Tibial artery (tissue), 4 donors: ENCODE measurements at regions of chr19 and their contacts with region 1.

Region 1: DNA sequence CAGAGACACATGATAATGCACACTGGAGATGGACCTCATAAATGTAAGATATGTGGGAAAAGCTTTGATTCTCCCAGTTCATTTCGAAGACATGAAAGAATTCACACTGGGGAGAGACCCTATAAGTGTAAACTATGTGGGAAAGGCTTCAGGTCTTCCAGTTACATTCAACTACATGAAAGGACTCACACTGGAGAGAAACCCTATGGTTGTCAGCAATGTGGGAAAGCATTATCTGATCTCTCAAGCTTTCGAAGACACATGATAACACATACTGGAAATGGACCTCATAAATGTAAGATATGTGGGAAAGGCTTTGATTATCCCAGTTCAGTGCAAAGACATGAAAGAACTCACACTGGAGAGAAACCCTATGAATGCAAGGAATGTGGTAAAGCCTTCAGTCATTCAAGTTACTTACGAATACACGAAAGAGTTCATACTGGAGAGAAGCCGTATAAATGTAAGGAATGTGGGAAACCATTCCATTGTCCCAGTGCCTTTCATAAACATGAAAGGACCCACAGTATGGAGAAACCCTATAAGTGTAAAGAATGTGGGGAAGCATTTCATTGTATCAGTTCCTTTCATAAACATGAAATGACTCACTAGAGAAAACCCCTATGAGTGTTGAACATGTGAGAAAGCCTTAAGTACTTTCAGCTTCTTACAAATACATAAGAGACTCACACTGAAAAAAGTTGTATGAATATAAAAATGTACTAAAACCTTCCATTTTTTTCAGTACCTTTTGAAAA is 14.7 kb downstream of the ZNF441 start:
- DNase-seq: no peak
- H3K4me3 ChIP-seq: no peak overlapping the region
- H3K27ac ChIP-seq: no peak overlapping the region
- H3K4me1 ChIP-seq: no peaks in the 10 kb centered on the region
- H3K27me3 ChIP-seq: no peaks in the 10 kb centered on the region
- CTCF ChIP-seq: no peak

Region 2: GRCh38 chr19:11481777-11482383 is 299.6 kb before region 1 on chr19:
- intact Hi-C with region 1: no loop called
- DNase-seq: peak; percentile 69 to 83
- H3K4me3 ChIP-seq: peak overlapping the region; percentile 16 to 44
- H3K27ac ChIP-seq: peak overlapping the region in 1 of 2 donors; percentile 10
- H3K4me1 ChIP-seq: peaks cover 8 to 37% (median 36%) of the 10 kb centered on the region in 4 donors
- H3K27me3 ChIP-seq: peaks cover 22 to 77% of the 10 kb centered on the region in 2 donors
- CTCF ChIP-seq: no peak

Region 3: DNA sequence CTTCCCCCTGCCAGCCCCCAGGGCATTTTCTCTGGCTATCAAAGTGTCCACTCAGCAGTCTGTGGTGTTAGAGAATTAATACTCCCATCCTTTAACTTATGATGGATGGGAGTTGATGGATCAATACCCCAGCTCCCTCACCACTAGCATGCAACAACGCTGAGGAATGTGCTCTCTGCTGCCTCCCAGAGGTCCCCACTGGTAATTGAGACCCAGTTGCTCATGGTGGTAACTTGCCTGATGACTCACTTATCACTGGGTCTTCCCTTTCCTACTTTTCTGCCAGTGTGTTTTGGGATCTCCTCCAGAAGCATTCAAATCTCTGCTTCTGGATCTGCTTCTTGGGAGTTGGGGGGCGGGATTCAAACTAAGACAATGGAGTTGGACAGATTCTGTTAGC is 1745.1 kb after region 1 on chr19:
- intact Hi-C with region 1: loop called (anchors 5 kb)
- DNase-seq: no peak
- H3K4me3 ChIP-seq: no peak overlapping the region
- H3K27ac ChIP-seq: no peak overlapping the region
- H3K4me1 ChIP-seq: no peaks in the 10 kb centered on the region
- H3K27me3 ChIP-seq: peaks cover 0 to 24% of the 10 kb centered on the region in 2 donors
- CTCF ChIP-seq: no peak